ENCODE measurements at regions of chr6 and their contacts with region 1.

Region 1: GRCh38 chr6:138307816-138308728 is 69.6 kb upstream of the SMIM28 start:
- DNase-seq: no peak
- ATAC-seq: peak; percentile 86

Region 2: GRCh38 chr6:138403801-138404661 is 96.0 kb after region 1 on chr6 and contains the start of gene HEBP2:
- intact Hi-C with region 1: loop called (anchors 5 kb)
- DNase-seq: peak; percentile 98
- ATAC-seq: peak; percentile 96
- total RNA-seq, gene HEBP2: 103 TPM

Measured in Right ventricle myocardium inferior (tissue), 1 donor.